Activated CD4-positive, alpha-beta T cell treated with anti-CD3 and anti-CD28 coated beads, Interleukin-2, amount 10 ng/mL, durations not matched to agents 24 days and 14 days (primary cell): ENCODE measurements at regions of chr16 and their contacts with region 1.

Region 1: DNA sequence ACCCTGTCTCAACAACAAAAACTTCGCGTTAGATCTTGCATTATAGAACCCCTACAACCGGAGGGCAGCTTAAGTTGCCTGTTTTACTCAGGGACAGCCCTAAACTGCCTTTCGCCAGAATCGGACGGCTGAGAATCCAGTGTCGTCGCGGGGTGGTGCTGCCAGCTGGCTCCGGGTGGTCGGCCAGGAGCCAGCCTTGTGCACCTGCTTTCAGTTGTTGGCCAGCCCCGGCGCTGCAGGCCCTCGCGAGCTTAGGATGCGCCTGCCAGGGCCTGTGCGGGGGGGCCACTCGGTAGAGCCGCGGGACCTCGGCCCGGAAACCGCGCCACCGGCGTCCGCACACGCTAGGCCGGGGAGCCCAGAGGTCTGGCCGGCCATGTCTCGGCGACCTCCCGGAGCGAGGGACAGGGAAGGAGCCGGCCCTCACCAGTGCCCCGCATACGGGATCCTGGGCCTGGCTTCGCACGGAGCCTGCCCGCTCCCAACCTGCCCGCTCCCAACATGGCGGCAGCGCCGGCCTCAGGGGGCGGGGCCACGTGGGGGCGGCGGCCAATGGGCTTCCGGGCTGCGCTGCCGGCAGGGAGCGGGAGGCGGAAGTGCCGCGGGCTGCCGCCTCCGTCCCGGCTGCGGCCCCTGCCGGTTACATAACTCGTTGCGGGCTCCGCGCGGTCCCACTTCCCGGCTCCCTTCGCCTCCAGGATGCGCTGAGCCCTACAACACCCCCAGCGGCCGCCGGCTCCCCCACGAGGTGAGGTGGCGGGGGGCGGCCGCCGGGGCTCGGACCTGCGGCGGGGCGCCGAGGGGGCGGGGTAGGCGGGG is 14.2 kb downstream of the NAA60 start:
- DNase-seq: peak; percentile 97
- H3K4me3 Mint-ChIP-seq: peak overlapping the region; percentile 85
- H3K27ac Mint-ChIP-seq: peak overlapping the region; percentile 84
- H3K4me1 Mint-ChIP-seq: peaks cover 39% of the 10 kb centered on the region
- H3K27me3 Mint-ChIP-seq: no peaks in the 10 kb centered on the region

Region 2: DNA sequence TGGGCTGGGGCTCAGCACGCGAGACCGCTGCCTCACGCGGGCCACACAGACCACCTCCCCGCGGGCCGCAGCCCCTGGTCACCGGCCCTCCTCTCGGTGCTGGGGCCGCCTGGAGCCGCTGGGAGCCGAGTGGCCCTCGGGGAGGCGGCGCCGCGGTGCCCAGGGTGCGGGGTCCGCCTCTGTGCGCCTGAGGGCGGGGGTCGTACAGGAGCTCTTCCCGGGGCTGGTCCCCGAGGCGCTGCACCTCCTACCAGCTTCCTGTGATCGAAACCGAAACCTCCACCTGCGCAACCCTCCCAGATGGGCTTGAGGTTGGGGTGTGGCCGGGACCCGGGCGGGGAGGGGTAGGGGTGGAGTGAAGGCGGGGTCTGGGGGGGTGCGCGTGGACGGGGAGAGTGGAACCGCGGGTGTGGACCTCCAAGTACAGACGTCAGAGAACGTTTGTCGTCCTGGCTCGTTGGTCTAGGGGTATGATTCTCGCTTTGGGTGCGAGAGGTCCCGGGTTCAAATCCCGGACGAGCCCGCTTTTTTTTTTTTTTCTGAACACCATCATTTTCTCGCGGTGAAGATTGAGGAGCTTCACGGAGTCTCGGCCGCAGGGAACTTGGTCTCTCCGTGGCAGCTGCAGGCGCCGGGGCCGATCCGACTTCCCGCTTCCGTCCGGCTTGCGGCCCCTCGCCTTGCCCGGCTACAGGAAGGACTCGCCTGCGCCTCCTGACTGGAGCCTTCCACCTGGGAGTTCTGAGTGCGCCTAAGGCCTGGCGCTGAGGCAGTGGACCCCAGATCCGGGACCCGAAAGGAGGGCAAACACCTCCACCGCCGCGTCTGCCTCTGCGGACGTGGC is 298.9 kb before region 1 on chr16:
- intact Hi-C with region 1: loop called (anchors 5 kb)
- DNase-seq: peak; percentile 96
- H3K4me3 Mint-ChIP-seq: peak overlapping the region; percentile 94
- H3K27ac Mint-ChIP-seq: peak overlapping the region; percentile 90
- H3K4me1 Mint-ChIP-seq: peaks cover 29% of the 10 kb centered on the region
- H3K27me3 Mint-ChIP-seq: peaks cover 18% of the 10 kb centered on the region

Region 3: GRCh38 chr16:3400779-3401688 is 56.6 kb before region 1 on chr16 and contains the starts of genes ZNF174 and ZSCAN32:
- intact Hi-C with region 1: loop called (anchors 1 kb)
- DNase-seq: peak; percentile 100
- H3K4me3 Mint-ChIP-seq: peak within 1 kb of the TSS; percentile 90
- H3K27ac Mint-ChIP-seq: peak within 1 kb of the TSS; percentile 86
- H3K4me1 Mint-ChIP-seq: peaks cover 20% of the 10 kb centered on the region
- H3K27me3 Mint-ChIP-seq: no peaks in the 10 kb centered on the region
- total RNA-seq, gene ZNF174: 10.1 and 11.4 TPM in 2 replicates
- total RNA-seq, gene ZSCAN32: 16.8 and 17.9 TPM in 2 replicates